Heart left ventricle (tissue), 16 donors: ENCODE measurements at regions of chr7 and their contacts with region 1.

Region 1: DNA sequence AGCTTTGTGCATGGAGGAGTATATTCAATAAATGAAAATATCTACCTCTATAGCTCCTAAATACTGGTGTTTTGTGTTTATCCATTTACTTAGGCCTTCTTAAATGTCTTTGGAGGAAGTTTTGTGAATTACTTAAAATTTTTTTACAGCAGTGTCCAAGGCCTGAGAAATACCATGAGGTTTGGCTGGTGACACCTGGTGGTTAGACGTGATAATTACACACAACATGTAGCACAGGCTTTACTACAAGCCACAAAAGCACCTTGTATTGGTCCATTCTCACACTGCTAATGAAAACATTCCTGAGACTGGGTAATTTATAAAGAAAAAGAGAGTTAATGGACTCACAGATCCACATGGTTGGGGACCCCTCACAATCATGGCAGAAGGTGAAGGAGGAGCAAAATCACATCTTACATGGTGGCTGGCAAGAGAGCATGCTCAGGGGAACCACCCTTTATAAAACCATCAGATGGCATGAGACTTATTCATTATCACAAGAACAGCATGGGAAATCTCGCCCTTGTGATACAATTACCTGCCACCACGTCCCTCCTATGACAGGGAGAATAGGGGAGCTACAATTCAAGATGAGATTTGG is 20.6 kb downstream of the HYAL4 start:
- DNase-seq: peak in 3 of 5 donors; percentile 30 to 42 (median 38)
- ATAC-seq: peak; percentile 58 to 85 (median 84)
- H3K4me3 ChIP-seq: no peak overlapping the region
- H3K27ac ChIP-seq: no peak overlapping the region
- H3K4me1 ChIP-seq: peaks cover 0 to 13% (median 4%) of the 10 kb centered on the region in 12 donors
- H3K27me3 ChIP-seq: no peaks in the 10 kb centered on the region
- CTCF ChIP-seq: peak; percentile 63 to 87 (median 78)
- POLR2A ChIP-seq: no peak

Region 2: DNA sequence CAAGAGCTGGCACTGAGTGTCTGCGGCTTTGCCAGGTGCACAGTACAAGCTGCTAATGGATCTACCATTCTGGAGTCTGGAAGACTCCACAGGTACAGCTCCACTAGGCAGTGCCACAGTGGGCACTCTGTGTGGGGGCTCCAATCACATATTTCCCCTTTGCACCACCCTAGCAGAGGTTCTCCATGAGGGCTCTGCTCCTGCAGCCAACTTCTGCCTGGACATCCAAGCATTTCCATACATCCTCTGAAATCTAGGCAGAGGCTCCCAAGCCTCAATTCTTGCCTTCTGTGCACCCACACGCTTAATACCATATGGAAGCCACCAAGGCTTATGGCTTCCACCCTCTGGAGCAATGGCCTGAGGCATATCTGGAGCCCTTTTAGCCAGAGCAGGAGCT is 360.4 kb before region 1 on chr7:
- intact Hi-C with region 1: no loop called
- DNase-seq: no peak
- ATAC-seq: no peak
- H3K4me3 ChIP-seq: no peak overlapping the region
- H3K27ac ChIP-seq: no peak overlapping the region
- H3K4me1 ChIP-seq: no peaks in the 10 kb centered on the region
- H3K27me3 ChIP-seq: no peaks in the 10 kb centered on the region
- CTCF ChIP-seq: no peak
- POLR2A ChIP-seq: no peak

Region 3: DNA sequence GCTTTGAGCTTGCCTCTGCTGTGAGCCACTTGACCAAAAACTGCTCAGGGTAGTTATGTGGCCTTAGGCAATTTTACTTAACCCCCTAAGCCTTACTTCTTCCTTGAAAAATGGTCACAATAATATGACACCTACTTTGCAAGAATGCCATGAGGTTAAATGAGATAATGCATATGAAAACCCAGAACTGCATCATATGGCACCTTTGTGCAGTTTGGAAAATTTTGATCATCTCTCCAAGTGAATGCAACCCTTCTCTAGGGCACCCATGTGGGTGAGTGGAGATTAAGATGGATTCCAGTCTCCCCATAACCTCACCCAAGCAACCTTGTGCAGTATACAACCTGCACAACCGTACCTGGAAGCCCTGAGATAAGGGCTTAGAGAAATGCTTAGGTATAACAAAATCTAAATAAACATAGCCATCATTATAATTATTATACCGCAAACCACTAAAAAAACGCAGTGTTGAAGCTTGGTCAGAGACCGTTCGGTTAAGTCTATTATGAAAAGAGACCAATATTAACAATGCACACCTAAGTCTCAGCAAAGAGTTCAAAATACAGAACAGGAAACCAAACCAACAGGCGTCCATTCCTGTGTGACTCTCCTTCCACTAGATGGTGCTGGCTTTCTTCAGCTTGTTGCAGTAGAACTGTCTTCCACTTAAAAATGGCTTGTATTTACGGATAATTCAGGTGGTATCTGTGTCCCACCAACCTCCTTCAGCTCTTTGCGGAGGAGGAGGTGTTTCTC is 285.0 kb before region 1 on chr7:
- intact Hi-C with region 1: loop called in 8 of 10 experiments (anchors 2 to 10 kb)
- DNase-seq: no peak
- ATAC-seq: peak; percentile 65 to 84 (median 80)
- H3K4me3 ChIP-seq: no peak overlapping the region
- H3K27ac ChIP-seq: peak overlapping the region in 2 of 12 donors; percentile 2 to 17
- H3K4me1 ChIP-seq: no peaks in the 10 kb centered on the region
- H3K27me3 ChIP-seq: no peaks in the 10 kb centered on the region
- CTCF ChIP-seq: peak; percentile 38 to 74 (median 64)
- POLR2A ChIP-seq: no peak

Region 4: DNA sequence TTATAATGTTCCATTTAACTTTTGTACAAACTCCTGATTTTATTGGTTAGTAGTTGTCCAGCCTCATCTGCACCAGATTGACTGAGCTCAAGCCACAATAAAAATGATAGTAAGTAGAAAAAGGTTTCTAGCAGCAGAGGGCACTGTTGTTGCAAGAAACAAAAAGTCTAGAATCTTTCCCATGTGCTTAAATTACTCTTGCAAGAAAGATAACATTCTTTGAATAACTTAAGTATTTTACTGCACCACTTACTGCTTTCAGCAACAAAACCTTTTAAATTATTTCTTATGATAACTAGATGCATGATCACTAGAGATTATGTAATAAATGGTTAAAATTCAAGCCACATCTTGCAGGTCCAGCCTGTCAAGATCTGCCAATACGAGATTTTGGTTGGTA is 182.9 kb before region 1 on chr7:
- intact Hi-C with region 1: loop called (anchors 2 to 10 kb)
- DNase-seq: no peak
- ATAC-seq: peak in 2 of 4 donors; percentile 24 to 40
- H3K4me3 ChIP-seq: no peak overlapping the region
- H3K27ac ChIP-seq: peak overlapping the region in 3 of 12 donors; percentile 54 to 73 (median 61)
- H3K4me1 ChIP-seq: peaks cover 0 to 41% (median 16%) of the 10 kb centered on the region in 12 donors
- H3K27me3 ChIP-seq: no peaks in the 10 kb centered on the region
- CTCF ChIP-seq: peak; percentile 31 to 70 (median 57)
- POLR2A ChIP-seq: no peak

Region 5: DNA sequence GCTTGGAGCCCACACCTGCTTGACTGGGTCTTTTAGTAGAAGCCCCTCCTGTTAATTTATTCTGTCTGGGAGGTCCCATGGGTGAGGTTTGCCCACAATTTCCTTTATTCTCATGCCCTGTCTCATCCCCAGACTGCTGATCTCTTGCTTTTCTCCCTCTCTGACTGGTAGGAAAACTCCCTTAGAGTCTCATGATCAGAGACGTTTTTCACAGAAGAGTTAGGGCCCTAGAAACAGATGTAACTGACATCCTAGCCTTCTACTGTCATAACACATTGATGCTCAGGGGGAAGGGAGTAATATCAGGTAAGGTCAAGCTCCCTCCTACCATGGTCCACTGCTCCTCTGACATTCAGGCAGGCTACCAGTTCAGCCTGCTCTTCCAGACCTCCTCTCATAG is 73.1 kb before region 1 on chr7:
- intact Hi-C with region 1: loop called in 6 of 10 experiments (anchors 2 to 5 kb)
- DNase-seq: no peak
- ATAC-seq: no peak
- H3K4me3 ChIP-seq: no peak overlapping the region
- H3K27ac ChIP-seq: no peak overlapping the region
- H3K4me1 ChIP-seq: no peaks in the 10 kb centered on the region
- H3K27me3 ChIP-seq: no peaks in the 10 kb centered on the region
- CTCF ChIP-seq: no peak
- POLR2A ChIP-seq: no peak